Activated T-helper 1 cell treated with anti-CD3 and anti-CD28 coated beads, Interleukin-12 subunit alpha, Interleukin-12 subunit beta, Interleukin-2, Interleukin-4 antibody, amounts not matched to agents 30 ng/mL and 10 ng/mL and 1 ng/mL, durations not matched to agents 14 hours and 24 hours and 36 hours (primary cell): ENCODE measurements at regions of chr1 and their contacts with region 1.

Region 1: GRCh38 chr1:153990468-153991150 is at the start of gene RPS27:
- DNase-seq: peak; percentile 86
- H3K4me3 Mint-ChIP-seq: peak within 1 kb of the TSS; percentile 94
- H3K27ac Mint-ChIP-seq: peak within 1 kb of the TSS; percentile 94
- H3K4me1 Mint-ChIP-seq: peaks cover 51% of the 10 kb centered on the region
- H3K27me3 Mint-ChIP-seq: peaks cover 1% of the 10 kb centered on the region
- total RNA-seq, gene RPS27: 1,226 and 1,349 TPM in 2 replicates

Region 2: DNA sequence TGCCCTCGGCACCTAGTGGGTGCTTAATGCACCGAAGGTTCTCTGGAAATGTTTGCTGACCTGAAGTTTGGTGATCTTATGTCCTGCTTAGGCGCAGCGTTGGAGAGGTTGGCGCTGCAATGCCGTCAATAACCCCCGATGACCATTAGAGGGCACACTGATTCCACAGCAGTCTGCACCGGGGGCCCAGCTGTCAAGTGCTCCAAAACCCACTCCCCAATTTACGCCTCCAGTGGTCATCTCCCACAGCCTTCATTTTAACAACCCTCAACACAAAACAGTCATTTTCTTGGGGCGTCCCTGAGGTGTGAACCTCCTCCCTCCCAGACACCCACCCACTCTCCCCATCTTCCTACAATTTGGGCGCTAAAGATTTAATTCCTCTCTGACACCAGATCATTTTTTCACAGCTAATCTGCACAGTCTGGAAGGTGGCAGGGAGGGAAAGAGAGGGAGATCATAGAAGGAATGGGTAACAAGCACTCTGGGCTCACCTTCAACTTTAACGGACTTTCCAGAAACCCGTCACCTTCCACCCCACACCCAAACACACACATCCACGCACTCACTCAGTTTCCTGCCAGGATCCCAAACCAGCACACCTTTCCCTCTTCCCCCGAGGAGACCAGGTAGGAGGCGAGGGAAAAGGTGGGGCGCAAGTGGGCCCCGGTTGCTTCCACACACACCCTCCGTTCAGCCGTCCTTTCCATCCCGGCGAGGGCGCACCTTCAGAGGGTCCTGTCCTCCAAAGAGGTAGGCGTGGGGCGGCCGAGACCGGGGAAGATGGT is 312.7 kb before region 1 on chr1:
- intact Hi-C with region 1: loop called (anchors 2 kb)
- DNase-seq: peak; percentile 30
- H3K4me3 Mint-ChIP-seq: peak overlapping the region; percentile 73
- H3K27ac Mint-ChIP-seq: no peak overlapping the region
- H3K4me1 Mint-ChIP-seq: peaks cover 23% of the 10 kb centered on the region
- H3K27me3 Mint-ChIP-seq: peaks cover 44% of the 10 kb centered on the region

Region 3: DNA sequence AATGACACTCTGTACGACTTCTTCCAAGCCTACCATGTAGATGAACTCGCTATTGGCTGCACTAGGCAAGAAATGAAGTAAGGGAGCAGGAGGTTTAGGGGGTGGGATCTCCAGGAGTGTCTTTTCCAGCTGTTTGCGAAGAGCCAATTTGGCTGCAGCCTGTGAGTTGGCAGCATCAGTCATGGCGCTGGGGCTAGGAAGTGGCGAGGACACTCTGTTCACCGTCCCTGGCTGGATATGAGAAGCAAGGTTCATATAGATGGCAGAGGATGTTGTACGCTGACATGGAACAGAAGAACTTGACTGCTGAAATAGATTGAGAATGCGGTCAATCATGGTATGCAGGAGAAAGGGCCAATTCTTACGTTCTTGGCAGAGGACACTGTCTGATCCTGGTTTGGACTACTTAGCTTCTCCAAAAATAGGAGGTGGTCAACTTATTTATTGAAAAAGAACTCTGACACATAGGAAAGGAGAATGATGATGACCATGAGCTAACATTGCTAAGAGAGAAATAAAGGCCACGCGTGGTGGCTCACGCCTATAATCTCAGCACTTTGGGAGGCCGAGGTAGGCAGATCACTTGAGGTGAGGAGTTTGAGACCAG is 174.2 kb before region 1 on chr1:
- intact Hi-C with region 1: loop called (anchors 1 kb)
- DNase-seq: no peak
- H3K4me3 Mint-ChIP-seq: no peak overlapping the region
- H3K27ac Mint-ChIP-seq: no peak overlapping the region
- H3K4me1 Mint-ChIP-seq: no peaks in the 10 kb centered on the region
- H3K27me3 Mint-ChIP-seq: no peaks in the 10 kb centered on the region

Region 4: DNA sequence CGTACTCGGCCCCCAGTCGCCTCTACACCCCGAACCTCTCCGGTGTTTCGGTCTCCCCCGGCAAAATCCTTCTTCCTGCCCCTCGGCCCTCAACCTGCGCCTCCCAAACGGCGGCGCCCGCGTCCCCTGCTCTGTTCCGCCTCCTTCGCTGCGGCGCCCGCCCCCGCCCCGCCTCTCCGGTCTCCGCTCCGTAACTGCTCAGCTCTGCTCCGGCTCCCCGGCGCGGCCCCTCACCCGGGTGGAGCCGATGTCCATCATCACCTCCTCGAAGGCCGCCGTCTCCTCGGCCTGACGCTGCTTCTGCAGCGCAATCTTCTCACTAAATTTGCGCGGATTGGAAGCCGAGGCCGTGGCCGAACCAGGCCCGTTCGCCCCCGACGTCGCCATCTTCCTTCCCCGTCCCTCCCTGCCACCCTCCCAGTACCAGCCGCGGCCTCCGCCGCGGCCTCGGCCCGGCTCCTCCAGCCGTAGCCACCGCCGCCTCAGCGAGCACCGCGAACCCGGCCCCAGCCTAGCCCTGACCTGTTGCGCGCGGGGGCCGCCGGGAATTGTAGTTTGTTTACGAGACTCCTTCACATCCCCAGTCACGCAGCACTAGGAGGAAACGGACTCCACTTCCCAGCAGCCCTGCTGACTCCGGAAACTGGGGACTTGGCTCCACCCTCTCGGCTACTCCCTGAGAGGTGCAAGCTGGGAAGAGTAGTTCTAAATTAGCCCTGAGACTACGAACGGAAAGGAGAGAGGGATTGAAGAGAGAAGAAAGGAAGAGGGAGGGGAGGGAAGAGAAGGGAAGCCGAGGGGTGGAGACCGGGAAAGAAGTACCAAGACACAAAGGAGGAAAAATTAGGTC is 32.3 kb before region 1 on chr1 and contains the start of gene CRTC2:
- intact Hi-C with region 1: loop called (anchors 1 kb)
- DNase-seq: peak; percentile 96
- H3K4me3 Mint-ChIP-seq: peak within 1 kb of the TSS; percentile 97
- H3K27ac Mint-ChIP-seq: peak within 1 kb of the TSS; percentile 81
- H3K4me1 Mint-ChIP-seq: peaks cover 65% of the 10 kb centered on the region
- H3K27me3 Mint-ChIP-seq: no peaks in the 10 kb centered on the region
- total RNA-seq, gene CRTC2: 62.8 and 76.4 TPM in 2 replicates

Region 5: GRCh38 chr1:154157520-154158306 is 167.1 kb after region 1 on chr1:
- intact Hi-C with region 1: loop called (anchors 2 kb)
- DNase-seq: peak; percentile 79
- H3K4me3 Mint-ChIP-seq: peak overlapping the region; percentile 62
- H3K27ac Mint-ChIP-seq: peak overlapping the region; percentile 70
- H3K4me1 Mint-ChIP-seq: peaks cover 65% of the 10 kb centered on the region
- H3K27me3 Mint-ChIP-seq: no peaks in the 10 kb centered on the region

Region 6: DNA sequence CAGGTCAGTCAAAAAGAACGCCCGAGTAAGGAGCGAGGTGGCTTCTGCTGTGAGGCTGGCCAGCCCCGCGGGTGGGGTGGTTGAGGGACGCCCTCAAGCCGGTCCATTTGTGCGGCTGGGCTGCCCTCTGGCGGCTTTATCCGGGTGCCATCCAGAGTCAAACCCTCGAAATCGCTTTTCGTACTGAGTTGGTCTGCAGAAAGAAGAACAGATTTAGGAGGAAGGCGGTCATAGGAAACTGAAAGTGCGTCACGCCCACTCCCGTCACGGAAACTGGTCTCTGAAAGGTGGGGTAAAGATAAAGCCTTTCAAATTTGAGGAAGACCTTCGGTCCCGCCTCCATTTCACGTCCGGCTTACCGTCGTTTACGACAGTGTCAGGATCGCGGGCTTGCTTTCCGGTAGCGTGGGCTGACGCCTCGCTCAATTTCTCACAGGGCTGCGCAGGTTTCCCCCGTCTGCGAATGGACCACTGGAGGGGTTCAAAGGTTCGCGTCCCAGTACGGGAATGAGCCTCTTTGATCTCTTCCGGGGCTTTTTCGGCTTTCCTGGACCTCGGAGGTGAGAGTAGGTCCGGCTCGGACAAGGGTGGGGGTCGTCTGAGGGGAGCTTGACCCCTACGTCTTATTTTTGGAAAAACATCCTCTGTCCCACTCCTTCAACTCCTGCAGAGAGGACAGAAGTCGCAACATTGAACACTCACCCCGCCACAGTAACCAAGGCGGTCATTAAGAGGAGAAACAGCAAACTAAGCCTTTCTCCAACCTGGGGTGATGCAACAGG is 281.8 kb after region 1 on chr1 and contains the start of gene HAX1:
- intact Hi-C with region 1: loop called (anchors 2 kb)
- DNase-seq: peak; percentile 94
- H3K4me3 Mint-ChIP-seq: peak within 1 kb of the TSS; percentile 98
- H3K27ac Mint-ChIP-seq: peak within 1 kb of the TSS; percentile 97
- H3K4me1 Mint-ChIP-seq: peaks cover 46% of the 10 kb centered on the region
- H3K27me3 Mint-ChIP-seq: no peaks in the 10 kb centered on the region
- total RNA-seq, gene HAX1: 122 and 123 TPM in 2 replicates